PC-3 (cell line): ENCODE measurements at regions of chr11 and their contacts with region 1.

Region 1: GRCh38 chr11:76030286-76030685 is 176.0 kb downstream of the WNT11 start:
- DNase-seq: peak; percentile 99
- ATAC-seq: peak; percentile 85
- H3K4me3 ChIP-seq: peak overlapping the region; percentile 41; the same call in 1 of the 2 replicates
- H3K27ac ChIP-seq: peak overlapping the region; percentile 97
- H3K4me1 ChIP-seq: peaks cover 64% of the 10 kb centered on the region
- H3K27me3 ChIP-seq: no peaks in the 10 kb centered on the region
- CTCF ChIP-seq: no peak

Region 2: GRCh38 chr11:75814686-75815344 is 215.5 kb before region 1 on chr11 and contains the start of gene UVRAG:
- CTCF ChIA-PET with region 1: no interaction called
- POLR2A ChIA-PET with region 1: no interaction called
- intact Hi-C with region 1: loop called (anchors 5 kb)
- DNase-seq: peak; percentile 100
- ATAC-seq: peak; percentile 82
- H3K4me3 ChIP-seq: peak within 1 kb of the TSS; percentile 81
- H3K27ac ChIP-seq: peak within 1 kb of the TSS; percentile 64
- H3K4me1 ChIP-seq: peaks cover 36% of the 10 kb centered on the region
- H3K27me3 ChIP-seq: no peaks in the 10 kb centered on the region
- CTCF ChIP-seq: no peak
- total RNA-seq, gene UVRAG: 13.0 and 14.9 TPM in 2 replicates

Region 3: DNA sequence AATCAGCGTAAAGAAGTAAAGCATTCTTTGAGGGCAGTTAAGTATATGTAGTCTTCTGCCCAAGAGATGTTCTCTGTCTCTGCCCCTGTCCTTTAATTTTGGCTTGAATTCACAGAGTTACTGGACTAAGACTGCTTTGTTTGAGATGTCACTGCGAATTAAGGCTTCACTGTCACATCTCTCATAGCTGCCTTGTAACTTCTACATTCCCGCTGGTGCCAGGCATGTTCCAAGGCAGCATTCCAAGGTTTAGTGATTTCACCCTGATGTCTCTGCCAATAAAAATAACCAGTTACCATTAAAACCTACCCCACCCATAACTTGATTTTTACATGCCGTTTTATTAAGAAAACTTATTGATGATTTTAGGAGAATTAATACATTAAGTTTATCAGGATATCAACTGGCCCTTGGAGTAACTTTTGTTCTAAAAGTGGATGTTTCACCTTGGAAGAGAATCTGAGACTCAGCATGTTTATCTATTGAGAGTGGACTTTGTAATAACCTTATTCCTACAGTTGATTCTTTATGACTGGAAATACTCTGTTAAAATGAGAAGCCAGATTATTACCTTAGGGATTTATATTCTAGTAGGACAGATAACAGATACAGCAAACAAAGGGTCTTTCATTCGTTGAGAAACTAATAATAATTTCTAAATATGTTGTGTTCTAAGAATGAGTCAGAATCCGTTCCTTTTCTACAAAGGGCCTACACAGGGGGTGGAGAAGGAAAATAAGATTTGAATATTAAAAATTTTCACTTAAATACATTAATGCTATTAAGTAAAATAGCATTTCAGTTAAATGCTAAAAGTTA is 105.1 kb before region 1 on chr11:
- CTCF ChIA-PET with region 1: no interaction called
- POLR2A ChIA-PET with region 1: no interaction called
- intact Hi-C with region 1: loop called (anchors 1 kb)
- DNase-seq: peak; percentile 52
- ATAC-seq: peak; percentile 75
- H3K4me3 ChIP-seq: no peak overlapping the region
- H3K27ac ChIP-seq: peak overlapping the region; percentile 46
- H3K4me1 ChIP-seq: peaks cover 19% of the 10 kb centered on the region
- H3K27me3 ChIP-seq: no peaks in the 10 kb centered on the region
- CTCF ChIP-seq: no peak

Region 4: DNA sequence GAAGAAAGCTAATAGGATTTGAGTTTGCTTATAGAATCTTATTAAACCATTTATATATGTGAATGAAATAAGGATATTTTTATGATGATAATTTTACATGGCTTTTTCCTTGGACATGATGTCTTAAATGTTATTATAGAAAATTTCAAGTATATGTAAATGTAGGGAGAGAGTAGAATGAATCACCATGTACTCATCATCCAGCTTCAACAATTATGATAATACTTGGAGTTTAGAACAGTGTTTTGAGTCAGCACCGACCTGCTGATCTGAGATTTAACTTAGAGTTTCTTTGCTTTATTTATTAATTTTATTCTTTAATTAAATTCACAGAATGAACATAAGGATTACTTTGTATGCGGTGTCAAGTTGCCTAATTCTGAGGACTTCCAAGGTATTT is 21.8 kb before region 1 on chr11:
- CTCF ChIA-PET with region 1: interaction called, 3 read pairs
- POLR2A ChIA-PET with region 1: no interaction called
- intact Hi-C with region 1: loop called (anchors 2 kb)
- DNase-seq: peak; percentile 86
- ATAC-seq: peak; percentile 76
- H3K4me3 ChIP-seq: peak overlapping the region; percentile 14; the same call in 1 of the 2 replicates
- H3K27ac ChIP-seq: peak overlapping the region; percentile 95
- H3K4me1 ChIP-seq: peaks cover 58% of the 10 kb centered on the region
- H3K27me3 ChIP-seq: no peaks in the 10 kb centered on the region
- CTCF ChIP-seq: no peak

Region 5: DNA sequence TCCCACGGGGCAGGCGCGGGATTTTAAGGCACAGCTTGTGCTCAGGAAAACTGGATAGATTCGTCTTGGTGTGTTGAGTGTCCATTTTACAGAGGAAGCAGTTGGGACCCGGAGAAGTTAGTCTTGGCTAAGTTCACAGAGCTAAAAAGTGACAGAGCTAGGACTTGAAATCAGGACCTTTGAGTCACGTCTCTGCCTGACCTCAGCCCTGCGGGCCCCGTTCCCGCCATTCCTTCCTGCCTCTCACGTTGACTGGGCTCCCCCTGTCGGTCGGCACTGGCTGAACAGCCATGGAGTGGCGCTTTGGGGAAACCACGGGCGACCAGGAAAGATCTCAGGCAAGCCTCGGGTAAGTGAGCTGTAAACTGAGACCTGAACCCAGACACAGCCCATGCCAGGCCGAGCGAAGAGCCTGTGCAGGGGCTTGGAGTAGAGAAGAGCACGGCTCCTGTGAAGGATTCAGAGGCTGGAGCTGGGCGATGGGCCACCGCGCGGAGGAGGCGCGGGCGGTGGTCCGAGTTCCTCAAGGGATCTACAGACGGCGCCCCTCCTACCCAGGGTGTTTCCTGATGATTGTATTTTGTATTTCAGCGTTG is 121.9 kb after region 1 on chr11:
- CTCF ChIA-PET with region 1: no interaction called
- POLR2A ChIA-PET with region 1: no interaction called
- intact Hi-C with region 1: loop called (anchors 1 kb)
- DNase-seq: peak; percentile 94
- ATAC-seq: peak; percentile 55
- H3K4me3 ChIP-seq: no peak overlapping the region
- H3K27ac ChIP-seq: no peak overlapping the region
- H3K4me1 ChIP-seq: peaks cover 37% of the 10 kb centered on the region
- H3K27me3 ChIP-seq: no peaks in the 10 kb centered on the region
- CTCF ChIP-seq: peak; percentile 98